ENCODE measurements at regions of chr19 and their contacts with region 1.

Region 1: DNA sequence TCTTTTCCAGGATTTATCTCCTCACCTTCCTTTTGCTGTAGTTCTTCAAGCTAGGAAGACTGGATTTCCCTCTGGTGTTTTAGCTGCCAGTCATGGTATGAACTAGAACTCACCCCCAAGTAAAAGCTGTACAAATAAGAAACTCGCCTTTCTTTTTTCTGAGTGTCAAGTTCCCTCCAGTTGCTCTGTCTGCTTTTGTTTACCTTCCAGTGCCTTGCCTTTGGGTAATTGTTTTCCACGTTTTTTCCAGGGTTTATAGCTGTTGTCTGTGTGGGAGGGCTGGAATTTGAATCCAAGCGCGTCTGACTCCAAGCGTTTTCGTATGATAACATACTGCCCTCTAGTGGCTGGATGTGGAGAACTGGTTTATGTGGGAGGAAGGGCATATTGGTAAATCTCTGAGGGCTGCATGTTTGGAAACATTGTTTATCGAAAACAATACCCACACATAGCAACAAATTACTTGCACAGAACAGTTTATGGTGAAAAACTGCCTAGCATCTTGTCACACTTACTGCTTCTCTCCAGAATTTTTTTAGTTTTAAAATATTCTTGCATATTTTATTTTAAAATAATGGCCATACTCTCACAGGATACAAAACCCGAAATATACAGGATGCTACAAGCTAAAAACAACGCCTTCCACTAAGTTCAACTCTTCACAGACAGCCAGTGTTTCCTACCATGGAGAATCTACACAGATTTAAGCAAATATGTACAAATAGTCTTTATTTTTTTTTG is 19.2 kb downstream of the RCN3 start:
- DNase-seq: peak; percentile 91 to 94
- ATAC-seq: peak; percentile 88 to 89
- H3K4me3 ChIP-seq: peak overlapping the region; percentile 23; the same call in 1 of the 3 replicates
- H3K27ac ChIP-seq: peak overlapping the region in 1 of 2 experiments; percentile 29; a peak in 3 of 6 replicates
- H3K4me1 ChIP-seq: 0 out of 3 replicates have a peak, but pooled peaks cover 3% of the 10 kb centered on the region
- CTCF ChIP-seq: peak; percentile 97
- EP300 ChIP-seq: no peak
- POLR2A ChIP-seq: no peak
- RAD21 ChIP-seq: peak; percentile 94 to 98

Region 2: GRCh38 chr19:49205114-49205513 is 341.9 kb before region 1 on chr19:
- CTCF ChIA-PET with region 1: no interaction called
- POLR2A ChIA-PET with region 1: no interaction called
- DNase-seq: no peak
- ATAC-seq: no peak
- H3K4me3 ChIP-seq: no peak overlapping the region
- H3K27ac ChIP-seq: no peak overlapping the region
- H3K4me1 ChIP-seq: 0 out of 3 replicates have a peak, but pooled peaks cover 3% of the 10 kb centered on the region
- CTCF ChIP-seq: no peak
- EP300 ChIP-seq: no peak
- POLR2A ChIP-seq: no peak
- RAD21 ChIP-seq: no peak

Region 3: DNA sequence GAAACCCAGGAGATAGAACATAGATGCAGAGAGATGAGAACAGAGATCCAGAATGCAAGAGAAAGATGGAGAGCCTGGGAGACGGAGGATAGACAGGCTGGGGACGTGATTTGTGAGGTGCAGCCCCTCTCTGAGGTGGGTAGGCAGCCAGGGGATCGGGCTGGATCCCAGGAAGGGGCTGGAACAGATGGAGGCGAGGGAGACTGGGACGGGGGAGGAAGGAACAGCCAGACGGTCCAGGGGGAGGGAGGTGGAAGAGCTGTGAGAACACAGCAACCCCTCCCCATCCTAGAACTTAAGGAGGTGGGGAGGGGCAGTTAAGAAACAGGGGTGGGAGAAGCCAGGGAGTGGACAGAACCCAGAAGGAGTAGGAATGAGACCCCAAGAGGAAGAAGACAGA is 108.7 kb before region 1 on chr19:
- CTCF ChIA-PET with region 1: no interaction called
- POLR2A ChIA-PET with region 1: no interaction called
- DNase-seq: no peak
- ATAC-seq: no peak
- H3K4me3 ChIP-seq: no peak overlapping the region
- H3K27ac ChIP-seq: no peak overlapping the region
- H3K4me1 ChIP-seq: peaks cover 19% of the 10 kb centered on the region
- CTCF ChIP-seq: no peak
- EP300 ChIP-seq: no peak
- POLR2A ChIP-seq: no peak
- RAD21 ChIP-seq: no peak

Region 4: GRCh38 chr19:49473868-49474544 is 73.0 kb before region 1 on chr19 and contains the start of gene FLT3LG:
- CTCF ChIA-PET with region 1: interaction called, 22 read pairs
- POLR2A ChIA-PET with region 1: interaction called, 12 read pairs
- DNase-seq: peak; percentile 61 to 90
- ATAC-seq: peak; percentile 59 to 71
- H3K4me3 ChIP-seq: peak within 1 kb of the TSS; percentile 59
- H3K27ac ChIP-seq: peak within 1 kb of the TSS; percentile 77 to 91
- H3K4me1 ChIP-seq: peaks cover 21% of the 10 kb centered on the region
- CTCF ChIP-seq: peak; percentile 99
- EP300 ChIP-seq: no peak
- POLR2A ChIP-seq: no peak
- RAD21 ChIP-seq: peak; percentile 36 to 59
- polyA plus RNA-seq, gene FLT3LG: 0.42 and 0.58 TPM in 2 replicates

Region 5: GRCh38 chr19:49520705-49521319 is 26.2 kb before region 1 on chr19:
- CTCF ChIA-PET with region 1: interaction called, 42 read pairs
- POLR2A ChIA-PET with region 1: no interaction called
- DNase-seq: no peak
- ATAC-seq: peak in 1 of 2 experiments; percentile 25; a peak in 3 of 6 replicates
- H3K4me3 ChIP-seq: no peak overlapping the region
- H3K27ac ChIP-seq: no peak overlapping the region
- H3K4me1 ChIP-seq: no peaks in the 10 kb centered on the region
- CTCF ChIP-seq: no peak
- EP300 ChIP-seq: no peak
- POLR2A ChIP-seq: no peak
- RAD21 ChIP-seq: no peak

Region 6: DNA sequence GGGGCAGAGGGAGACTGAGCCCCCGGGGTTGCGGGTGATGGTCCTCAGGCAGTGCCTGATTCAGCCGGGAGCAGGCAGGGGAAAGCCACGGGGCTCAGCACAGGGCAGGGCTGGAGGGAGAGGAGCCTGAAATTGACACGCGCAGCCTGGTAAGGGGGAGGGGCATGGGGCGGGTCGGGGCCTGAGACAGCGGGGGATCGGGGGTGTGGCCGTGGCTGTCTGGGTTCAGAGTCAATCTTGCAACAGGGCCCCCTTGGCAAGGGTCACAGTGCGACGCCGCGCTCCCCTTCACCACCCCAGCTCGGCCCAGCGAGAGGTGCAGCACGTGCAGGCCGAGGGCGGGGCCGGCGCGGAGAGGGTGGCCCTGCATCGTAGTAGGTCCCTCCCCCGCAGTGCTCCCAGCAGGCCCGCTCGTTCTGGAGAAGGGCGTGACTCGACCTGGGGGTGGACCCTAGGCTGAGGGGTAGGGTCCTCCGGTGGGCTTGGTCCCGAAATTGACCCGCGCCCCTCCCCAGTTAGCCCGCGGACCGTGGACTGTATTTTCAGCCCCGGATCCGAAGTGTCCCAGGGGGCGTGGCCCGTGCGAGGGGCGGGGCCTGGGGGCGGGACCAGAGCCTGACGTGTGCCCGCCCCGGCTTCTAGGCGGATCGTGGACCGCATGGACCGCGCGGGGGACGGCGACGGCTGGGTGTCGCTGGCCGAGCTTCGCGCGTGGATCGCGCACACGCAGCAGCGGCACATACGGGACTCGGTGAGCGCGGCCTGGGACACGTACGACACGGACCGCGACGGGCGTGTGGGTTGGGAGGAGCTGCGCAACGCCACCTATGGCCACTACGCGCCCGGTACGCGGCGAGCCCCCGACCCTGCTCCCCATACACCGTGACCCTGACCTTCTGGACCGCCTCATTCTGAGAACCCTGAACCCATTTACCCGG is 13.2 kb before region 1 on chr19:
- CTCF ChIA-PET with region 1: interaction called, 84 read pairs
- POLR2A ChIA-PET with region 1: no interaction called
- DNase-seq: peak; percentile 79 to 85
- ATAC-seq: peak; percentile 91 to 92
- H3K4me3 ChIP-seq: peak overlapping the region; percentile 58
- H3K27ac ChIP-seq: peak overlapping the region; percentile 9 to 73; a peak in 3 of 6 replicates
- H3K4me1 ChIP-seq: peaks cover 7% of the 10 kb centered on the region; the same call in 1 of the 3 replicates
- CTCF ChIP-seq: peak; percentile 49
- EP300 ChIP-seq: no peak
- POLR2A ChIP-seq: no peak; the same call in 1 of the 2 replicates
- RAD21 ChIP-seq: no peak

Region 7: DNA sequence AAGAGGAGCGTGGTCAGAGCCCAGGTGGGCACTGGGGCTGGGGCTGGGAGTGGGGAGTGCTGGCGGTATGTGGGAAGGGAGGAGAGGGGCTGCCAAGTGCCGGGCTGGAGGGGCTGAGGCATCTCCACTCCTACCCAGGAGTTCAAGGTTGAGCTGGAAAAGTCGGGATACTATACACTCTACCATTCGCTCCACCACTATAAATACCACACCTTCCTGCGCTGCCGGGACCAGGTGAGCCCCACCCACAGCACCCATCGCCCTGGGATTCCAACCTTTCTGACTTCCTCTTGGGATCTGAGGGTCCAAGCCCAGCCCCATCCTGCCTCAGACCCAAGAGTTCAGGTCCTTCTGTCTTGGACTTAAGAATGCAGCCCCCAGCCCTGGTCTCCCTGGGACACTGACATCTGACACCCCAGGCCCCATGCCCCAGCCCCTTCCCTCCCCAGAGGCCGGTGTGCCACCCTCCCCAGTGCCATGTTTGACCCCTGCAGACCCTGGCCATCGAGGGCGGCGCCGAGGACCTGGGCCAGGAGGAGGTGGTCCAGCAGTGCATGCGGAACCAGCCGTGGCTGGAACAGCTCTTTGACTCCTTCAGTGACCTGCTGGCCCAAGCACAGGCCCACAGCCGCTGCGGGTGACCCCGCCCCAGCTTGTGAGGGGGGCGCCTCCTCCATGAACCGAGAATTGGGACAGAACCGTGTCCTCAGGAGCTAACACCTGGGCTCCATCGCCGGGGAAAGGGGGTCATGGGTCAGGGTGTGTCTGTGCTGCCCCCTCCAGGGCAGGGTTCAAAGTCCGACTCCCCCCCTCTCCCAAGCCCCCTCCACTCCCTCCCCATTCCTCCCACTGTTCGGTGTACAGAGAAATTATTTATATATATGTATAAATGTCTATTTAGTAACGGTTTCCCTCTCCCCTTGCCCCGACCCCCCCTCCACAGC is 78.2 kb after region 1 on chr19:
- CTCF ChIA-PET with region 1: no interaction called
- POLR2A ChIA-PET with region 1: no interaction called
- DNase-seq: no peak
- ATAC-seq: peak; percentile 28 to 43; a peak in 5 of 6 replicates
- H3K4me3 ChIP-seq: no peak overlapping the region
- H3K27ac ChIP-seq: no peak overlapping the region
- H3K4me1 ChIP-seq: no peaks in the 10 kb centered on the region
- CTCF ChIP-seq: no peak
- EP300 ChIP-seq: no peak
- POLR2A ChIP-seq: no peak
- RAD21 ChIP-seq: no peak

Region 8: DNA sequence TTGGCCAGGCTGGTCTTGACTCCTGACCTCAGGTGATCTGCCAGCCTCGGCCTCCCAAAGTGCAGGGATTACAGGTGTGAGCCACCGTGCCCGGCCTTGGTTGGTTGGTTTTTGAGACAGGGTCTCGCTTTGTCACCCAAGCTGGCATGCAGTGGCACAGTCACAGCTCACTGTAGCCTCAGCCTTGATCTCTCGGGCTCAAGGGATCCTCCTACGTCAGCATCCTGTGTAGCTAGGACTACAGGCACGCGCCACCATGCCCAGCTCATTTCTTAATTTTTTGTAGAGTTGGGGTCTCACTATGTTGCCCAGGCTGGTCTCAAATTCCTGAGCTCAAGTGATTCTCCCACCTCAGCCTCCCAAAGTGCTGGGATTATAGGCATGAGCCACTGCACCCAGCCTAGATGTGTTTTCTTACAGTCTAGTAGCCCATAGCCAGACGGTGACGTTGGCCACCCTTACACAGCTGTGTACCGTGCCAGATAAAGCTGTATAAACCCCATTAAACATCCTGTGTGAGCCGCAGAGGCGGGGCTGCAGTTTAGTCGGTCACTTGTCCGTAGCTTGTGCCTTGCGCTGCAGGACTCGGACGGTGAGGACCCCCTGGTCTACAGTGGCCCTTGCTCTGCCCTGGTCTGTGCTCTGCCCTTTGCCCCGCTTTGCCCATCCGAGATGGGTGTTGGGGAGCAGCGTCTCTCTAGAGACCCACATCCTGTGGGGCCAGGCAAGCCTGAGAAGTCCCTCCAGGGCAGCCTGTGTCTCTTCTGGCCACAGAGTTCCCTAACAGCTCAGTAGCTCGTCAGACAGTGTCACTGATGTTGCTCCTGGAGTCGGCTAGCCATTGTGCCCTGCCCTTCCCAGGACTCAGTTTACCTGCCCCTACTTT is 108.8 kb after region 1 on chr19:
- CTCF ChIA-PET with region 1: interaction called, 10 read pairs
- POLR2A ChIA-PET with region 1: no interaction called
- DNase-seq: no peak
- ATAC-seq: no peak
- H3K4me3 ChIP-seq: no peak overlapping the region
- H3K27ac ChIP-seq: no peak overlapping the region
- H3K4me1 ChIP-seq: no peaks in the 10 kb centered on the region
- CTCF ChIP-seq: no peak
- EP300 ChIP-seq: no peak
- POLR2A ChIP-seq: no peak
- RAD21 ChIP-seq: no peak

Measured in A549 (cell line).